Dorsolateral prefrontal cortex (tissue), 120 donors: ENCODE measurements at regions of chr2 and their contacts with region 1.

Region 1: GRCh38 chr2:190648289-190649034 is 421 bp upstream of the NAB1 start:
- DNase-seq: peak; percentile 80 to 95 (median 86)
- H3K4me3 ChIP-seq: peak overlapping the region; percentile 58 to 92 (median 84)
- H3K27ac ChIP-seq: peak overlapping the region; percentile 69 to 98 (median 94)
- H3K27me3 ChIP-seq: no peaks in the 10 kb centered on the region
- CTCF ChIP-seq: peak in 9 of 56 donors; percentile 6 to 32 (median 14)

Region 2: DNA sequence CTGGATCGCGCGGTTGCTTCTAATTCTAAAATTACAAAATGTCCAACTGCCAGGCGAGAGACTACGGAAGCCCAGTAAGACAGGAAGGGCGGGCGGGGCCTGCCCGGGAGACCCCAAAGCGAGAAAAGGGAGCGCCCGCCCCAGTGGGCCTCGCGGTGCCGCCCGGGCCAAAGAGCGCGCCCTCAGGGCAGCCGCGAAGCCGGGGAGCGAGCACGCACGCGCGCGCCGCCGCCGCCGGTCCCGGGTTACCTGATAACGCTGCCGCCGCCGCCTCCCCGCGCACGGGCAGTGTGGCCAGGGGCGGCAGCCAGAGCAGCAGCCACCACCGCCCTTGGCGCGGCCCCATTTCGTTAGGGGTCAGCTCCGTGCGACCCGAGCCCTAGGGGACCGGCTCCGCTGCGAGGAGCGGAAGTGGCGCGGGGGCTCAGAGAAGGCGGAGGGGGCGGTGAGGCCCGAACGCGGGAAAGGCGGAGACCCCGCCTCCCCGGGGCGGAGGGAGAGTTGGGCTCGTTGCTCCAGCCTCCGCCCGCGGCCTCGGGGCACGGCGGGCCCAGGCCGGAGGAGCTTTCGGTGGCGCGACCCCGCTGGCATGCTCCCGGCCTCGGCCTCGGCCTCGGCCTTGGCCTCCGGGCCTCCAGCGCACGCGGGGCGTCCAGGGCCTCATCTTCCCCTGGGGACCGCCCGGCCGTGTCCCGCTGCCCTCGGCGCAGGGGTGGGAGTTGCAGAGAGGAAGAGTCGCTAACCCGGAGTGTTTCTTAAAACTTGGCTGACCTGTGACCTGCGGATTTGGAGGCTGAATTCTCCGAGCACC is 113.9 kb before region 1 on chr2 and contains the start of gene NEMP2:
- intact Hi-C with region 1: loop called (anchors 1 to 5 kb)
- DNase-seq: peak; percentile 55 to 88 (median 66)
- H3K4me3 ChIP-seq: peak within 1 kb of the TSS; percentile 56 to 96 (median 84)
- H3K27ac ChIP-seq: peak within 1 kb of the TSS; percentile 82 to 99 (median 96)
- H3K27me3 ChIP-seq: no peaks in the 10 kb centered on the region
- CTCF ChIP-seq: peak in 25 of 56 donors; percentile 9 to 61 (median 28)
- total RNA-seq, gene NEMP2: 1.1 to 9.4 (median 3.7) TPM

Region 3: GRCh38 chr2:190578158-190579057 is 70.1 kb before region 1 on chr2:
- intact Hi-C with region 1: loop called (anchors 5 to 10 kb)
- DNase-seq: peak in 3 of 10 donors; percentile 41 to 45 (median 42)
- H3K4me3 ChIP-seq: no peak overlapping the region
- H3K27ac ChIP-seq: peak overlapping the region in 53 of 59 donors; percentile 1 to 77 (median 51)
- H3K27me3 ChIP-seq: no peaks in the 10 kb centered on the region
- CTCF ChIP-seq: peak in 3 of 56 donors; percentile 9 to 26 (median 12)

Region 4: DNA sequence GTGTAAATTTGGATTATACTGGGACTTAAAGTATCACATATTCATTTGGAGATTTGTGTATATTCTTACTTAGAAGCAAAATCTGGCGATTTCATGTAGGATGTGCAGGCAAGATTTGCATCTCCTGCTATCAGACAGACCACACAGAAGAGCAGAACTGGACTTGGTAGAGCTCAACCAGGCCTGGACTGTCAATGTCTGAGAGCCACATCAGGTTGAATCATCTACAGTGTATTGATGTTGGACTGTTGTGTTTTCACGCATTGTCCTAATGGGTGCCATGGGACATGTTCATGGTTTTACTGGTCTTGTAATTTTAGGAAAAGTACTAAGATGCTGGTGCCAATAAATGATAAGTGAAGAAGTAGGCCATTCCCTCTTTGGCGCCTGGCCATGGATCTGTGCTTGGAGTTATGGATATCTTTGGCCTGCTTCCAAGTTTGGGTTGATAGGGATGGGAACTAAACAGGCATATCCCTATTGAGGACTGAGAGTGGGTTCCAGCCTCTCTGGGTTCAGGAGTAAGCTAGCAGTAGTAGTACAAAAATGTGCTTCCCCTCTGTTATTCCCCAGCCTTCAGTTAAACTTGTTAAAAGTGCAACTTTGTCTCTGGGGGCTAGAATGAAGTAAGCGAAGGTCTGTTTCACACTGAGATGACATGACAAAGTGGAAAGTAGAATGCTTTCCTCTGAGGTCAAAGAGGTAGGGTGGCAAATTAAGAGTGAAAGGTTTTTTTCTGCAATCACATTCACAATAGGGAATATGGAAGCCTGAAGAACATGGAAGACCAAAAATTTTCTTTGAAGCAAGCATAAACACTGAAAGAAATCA is 64.7 kb before region 1 on chr2:
- intact Hi-C with region 1: loop called (anchors 5 to 10 kb)
- DNase-seq: no peak
- H3K4me3 ChIP-seq: no peak overlapping the region
- H3K27ac ChIP-seq: peak overlapping the region in 58 of 59 donors; percentile 1 to 91 (median 79)
- H3K27me3 ChIP-seq: no peaks in the 10 kb centered on the region
- CTCF ChIP-seq: no peak